HepG2 (cell line): ENCODE measurements at regions of chr3 and their contacts with region 1.

Region 1: GRCh38 chr3:115704661-115705338 is 81.5 kb downstream of the GAP43 start:
- DNase-seq: no peak
- ATAC-seq: no peak
- H3K4me3 ChIP-seq: no peak overlapping the region
- H3K27ac ChIP-seq: no peak overlapping the region
- H3K4me1 ChIP-seq: peaks cover 34% of the 10 kb centered on the region
- H3K27me3 ChIP-seq: no peaks in the 10 kb centered on the region; a peak in 1 of 5 replicates
- CTCF ChIP-seq: no peak
- EP300 ChIP-seq: no peak
- POLR2A ChIP-seq: no peak
- RAD21 ChIP-seq: no peak

Region 2: DNA sequence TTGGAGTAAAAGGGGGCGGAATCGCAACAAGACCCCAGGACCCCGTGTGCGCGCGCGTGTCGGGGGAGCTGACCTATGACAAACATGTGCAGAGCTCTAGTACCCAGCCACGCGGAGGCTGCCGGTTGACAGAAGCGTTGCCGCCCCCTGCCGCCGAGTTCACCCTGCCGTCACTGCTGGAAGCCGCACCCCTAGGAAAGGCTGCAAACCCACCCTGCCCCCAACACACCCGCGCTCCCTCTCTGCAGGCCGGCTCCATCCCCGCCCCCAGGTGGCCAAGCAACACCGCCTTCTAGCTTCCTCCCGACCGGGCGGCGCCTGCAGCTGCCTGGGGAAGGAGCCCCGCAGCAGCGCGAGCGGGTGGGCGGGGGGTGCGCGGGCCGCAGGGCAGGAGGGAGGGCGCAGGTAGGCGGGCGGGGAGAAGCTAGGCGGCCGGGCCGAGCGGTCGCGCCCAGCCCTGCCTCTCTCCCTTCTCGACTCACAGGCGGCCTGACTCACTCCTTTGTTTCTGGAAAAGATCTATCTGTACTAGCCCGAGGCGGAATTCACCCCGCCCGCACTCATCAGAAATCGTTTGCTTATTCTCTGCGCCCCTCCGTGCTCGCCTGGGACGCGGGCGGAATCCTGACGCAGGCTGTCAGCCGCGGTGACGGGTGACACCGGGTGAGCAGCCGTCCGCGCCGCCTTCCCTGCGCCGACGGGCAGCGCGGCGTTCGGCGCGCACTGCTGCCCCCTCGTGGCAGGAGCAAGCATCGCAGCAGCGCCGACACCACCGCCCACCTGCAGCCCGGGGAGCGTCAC is 79.3 kb after region 1 on chr3:
- CTCF ChIA-PET with region 1: no interaction called
- POLR2A ChIA-PET with region 1: no interaction called
- in situ Hi-C with region 1: no loop called
- intact Hi-C with region 1: loop called (anchors 5 kb)
- DNase-seq: peak; percentile 87
- ATAC-seq: peak; percentile 96
- H3K4me3 ChIP-seq: peak overlapping the region; percentile 55 to 77 (median 70)
- H3K27ac ChIP-seq: peak overlapping the region; percentile 80
- H3K4me1 ChIP-seq: peaks cover 48% of the 10 kb centered on the region
- H3K27me3 ChIP-seq: no peaks in the 10 kb centered on the region
- CTCF ChIP-seq: peak; percentile 91
- EP300 ChIP-seq: peak in 1 of 2 experiments; percentile 61; a peak in 1 of 4 replicates
- POLR2A ChIP-seq: peak; percentile 14 to 64; a peak in 2 of 4 replicates
- RAD21 ChIP-seq: peak; percentile 91